Heart left ventricle (tissue), 16 donors: ENCODE measurements at regions of chr9 and their contacts with region 1.

Region 1: DNA sequence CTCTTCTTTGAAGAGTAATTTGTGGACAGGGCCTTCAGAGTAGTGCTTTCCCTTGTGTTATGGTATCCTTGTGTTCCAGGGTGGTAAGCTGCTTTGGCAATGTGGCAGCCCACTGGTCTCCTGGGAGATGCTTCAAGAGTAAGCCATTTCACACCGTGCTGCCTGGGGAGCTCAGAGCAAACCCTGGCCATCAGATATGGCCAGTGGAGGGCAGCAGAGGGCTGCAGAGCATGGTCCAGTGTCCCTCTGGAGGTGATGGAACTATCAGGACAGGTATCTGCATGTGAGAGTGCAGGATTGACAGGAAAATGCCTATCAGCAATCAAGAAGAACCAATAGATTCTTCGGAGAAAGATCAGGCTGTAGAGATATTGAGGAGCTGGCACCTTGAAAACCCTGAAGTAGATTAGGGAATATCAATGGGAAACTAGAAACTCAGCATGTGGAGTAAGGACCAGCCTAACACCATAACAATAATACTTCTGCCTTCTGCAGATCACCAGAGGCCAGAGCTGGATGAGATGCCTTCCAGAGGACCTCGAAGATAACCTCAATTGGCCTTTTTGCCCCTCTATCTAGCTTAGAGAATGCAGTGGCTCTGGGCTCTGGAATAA is 90.8 kb downstream of the PLPPR1 start:
- DNase-seq: peak; percentile 17 to 57 (median 29)
- ATAC-seq: peak in 3 of 4 donors; percentile 69 to 86 (median 70)
- H3K4me3 ChIP-seq: no peak overlapping the region
- H3K27ac ChIP-seq: no peak overlapping the region
- H3K4me1 ChIP-seq: peaks cover 0 to 6% (median 0%) of the 10 kb centered on the region in 12 donors
- H3K27me3 ChIP-seq: no peaks in the 10 kb centered on the region
- CTCF ChIP-seq: peak; percentile 52 to 78 (median 64)
- POLR2A ChIP-seq: no peak

Region 2: GRCh38 chr9:101235105-101235866 is 116.0 kb after region 1 on chr9:
- intact Hi-C with region 1: loop called (anchors 1 to 5 kb)
- DNase-seq: no peak
- ATAC-seq: peak in 1 of 4 donors; percentile 36
- H3K4me3 ChIP-seq: no peak overlapping the region
- H3K27ac ChIP-seq: no peak overlapping the region
- H3K4me1 ChIP-seq: no peaks in the 10 kb centered on the region
- H3K27me3 ChIP-seq: peaks cover 0 to 3% (median 0%) of the 10 kb centered on the region in 9 donors
- CTCF ChIP-seq: peak; percentile 32 to 67 (median 50)
- POLR2A ChIP-seq: no peak

Region 3: GRCh38 chr9:101311758-101312420 is 192.6 kb after region 1 on chr9:
- intact Hi-C with region 1: loop called in 6 of 10 experiments (anchors 1 to 10 kb)
- DNase-seq: no peak
- ATAC-seq: peak in 1 of 4 donors; percentile 45
- H3K4me3 ChIP-seq: no peak overlapping the region
- H3K27ac ChIP-seq: no peak overlapping the region
- H3K4me1 ChIP-seq: no peaks in the 10 kb centered on the region
- H3K27me3 ChIP-seq: peaks cover 0 to 17% (median 0%) of the 10 kb centered on the region in 9 donors
- CTCF ChIP-seq: peak; percentile 59 to 83 (median 72)
- POLR2A ChIP-seq: no peak